ENCODE measurements at regions of chr9 and their contacts with region 1.

Region 1: GRCh38 chr9:95167998-95168397 is 149.5 kb downstream of the FANCC start:
- DNase-seq: peak; percentile 42 to 62 (median 49)
- H3K4me3 ChIP-seq: no peak overlapping the region
- H3K4me3 Mint-ChIP-seq: peak overlapping the region in 3 of 8 donors; percentile 2 to 47 (median 16)
- H3K27ac ChIP-seq: no peak overlapping the region
- H3K27ac Mint-ChIP-seq: peak overlapping the region in 1 of 7 donors; percentile 68
- H3K4me1 ChIP-seq: no peaks in the 10 kb centered on the region
- H3K4me1 Mint-ChIP-seq: peaks cover 0 to 5% (median 3%) of the 10 kb centered on the region in 4 donors
- H3K27me3 ChIP-seq: no peaks in the 10 kb centered on the region
- H3K27me3 Mint-ChIP-seq: no peaks in the 10 kb centered on the region

Region 2: GRCh38 chr9:95181226-95181818 is 13.3 kb after region 1 on chr9:
- CTCF ChIA-PET with region 1: interaction called, 33 read pairs
- POLR2A ChIA-PET with region 1: no interaction called
- intact Hi-C with region 1: no loop called
- DNase-seq: peak in 3 of 5 donors; percentile 8 to 9 (median 8)
- H3K4me3 ChIP-seq: no peak overlapping the region
- H3K4me3 Mint-ChIP-seq: no peak overlapping the region
- H3K27ac ChIP-seq: no peak overlapping the region
- H3K27ac Mint-ChIP-seq: no peak overlapping the region
- H3K4me1 ChIP-seq: no peaks in the 10 kb centered on the region
- H3K4me1 Mint-ChIP-seq: no peaks in the 10 kb centered on the region
- H3K27me3 ChIP-seq: no peaks in the 10 kb centered on the region
- H3K27me3 Mint-ChIP-seq: no peaks in the 10 kb centered on the region